ENCODE measurements at regions of chr17 and their contacts with region 1.

Region 1: GRCh38 chr17:32997753-32998632 is 6.3 kb downstream of the SPACA3 start:
- DNase-seq: peak; percentile 80 to 89 (median 88)
- ATAC-seq: peak; percentile 93
- H3K4me3 ChIP-seq: no peak overlapping the region
- H3K27ac ChIP-seq: no peak overlapping the region
- H3K4me1 ChIP-seq: peaks cover 8% of the 10 kb centered on the region in 2 experiments; a peak in 4 of 5 replicates
- H3K27me3 ChIP-seq: no peaks in the 10 kb centered on the region; a peak in 1 of 5 replicates
- CTCF ChIP-seq: peak; percentile 88 to 93 (median 89)
- EP300 ChIP-seq: no peak
- POLR2A ChIP-seq: no peak
- RAD21 ChIP-seq: peak; percentile 82 to 84

Region 2: DNA sequence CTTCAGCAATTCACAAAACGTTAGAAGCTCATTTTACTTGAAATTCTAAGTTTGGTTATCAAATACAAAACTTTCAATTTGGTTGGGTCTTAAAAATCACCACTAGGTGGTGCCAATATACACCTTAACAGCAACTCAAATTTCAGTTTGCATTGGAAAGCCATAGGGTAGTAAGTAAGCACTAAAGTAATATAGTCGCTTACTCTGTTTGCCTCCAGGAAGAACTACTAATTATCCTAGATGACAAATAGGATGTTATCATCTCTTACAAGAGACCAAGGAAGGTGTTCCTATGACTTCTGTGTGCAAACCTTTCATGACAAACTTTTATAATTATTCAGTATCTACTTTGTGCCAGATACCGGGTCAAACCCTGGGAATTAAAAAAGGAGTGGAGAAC is 214.4 kb before region 1 on chr17:
- CTCF ChIA-PET with region 1: interaction called, 9 read pairs
- POLR2A ChIA-PET with region 1: no interaction called
- in situ Hi-C with region 1: no loop called
- intact Hi-C with region 1: loop called (anchors 1 kb)
- DNase-seq: peak; percentile 49 to 70 (median 54)
- ATAC-seq: peak; percentile 83
- H3K4me3 ChIP-seq: no peak overlapping the region
- H3K27ac ChIP-seq: no peak overlapping the region
- H3K4me1 ChIP-seq: peaks cover 3 to 10% of the 10 kb centered on the region in 2 experiments; a peak in 3 of 5 replicates
- H3K27me3 ChIP-seq: no peaks in the 10 kb centered on the region
- CTCF ChIP-seq: peak; percentile 56 to 87 (median 73); a peak in 5 of 6 replicates
- EP300 ChIP-seq: no peak
- POLR2A ChIP-seq: no peak
- RAD21 ChIP-seq: peak; percentile 95 to 98

Region 3: DNA sequence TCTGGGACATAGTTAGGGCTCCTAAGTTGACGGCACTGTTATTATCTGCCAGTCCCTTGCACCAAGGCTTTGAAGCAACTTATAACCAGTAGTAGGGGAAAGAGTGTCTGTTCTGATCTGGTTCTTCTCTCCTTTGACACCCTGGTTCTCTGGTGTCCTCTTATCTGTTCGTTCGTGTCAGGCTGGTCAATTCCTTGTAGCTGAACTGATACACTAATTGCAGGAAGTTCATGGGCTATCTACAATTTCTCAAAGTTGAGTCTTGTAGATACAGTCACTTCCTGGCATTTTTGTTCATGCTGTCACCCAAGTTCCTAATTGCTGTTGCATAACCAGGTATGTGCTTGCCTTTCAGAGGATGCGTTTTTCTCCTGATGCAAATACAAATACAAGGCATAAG is 103.7 kb before region 1 on chr17:
- CTCF ChIA-PET with region 1: no interaction called
- POLR2A ChIA-PET with region 1: no interaction called
- in situ Hi-C with region 1: no loop called
- intact Hi-C with region 1: no loop called
- DNase-seq: peak in 2 of 4 experiments; percentile 70 to 82
- ATAC-seq: peak; percentile 39
- H3K4me3 ChIP-seq: no peak overlapping the region
- H3K27ac ChIP-seq: peak overlapping the region; percentile 77
- H3K4me1 ChIP-seq: peaks cover 8 to 55% of the 10 kb centered on the region in 2 experiments
- H3K27me3 ChIP-seq: no peaks in the 10 kb centered on the region
- CTCF ChIP-seq: no peak
- EP300 ChIP-seq: peak; percentile 87
- POLR2A ChIP-seq: no peak
- RAD21 ChIP-seq: no peak

Region 4: GRCh38 chr17:32936894-32937500 is 61.0 kb before region 1 on chr17:
- CTCF ChIA-PET with region 1: interaction called, 7 read pairs
- POLR2A ChIA-PET with region 1: interaction called, 3 read pairs
- in situ Hi-C with region 1: no loop called
- intact Hi-C with region 1: loop called (anchors 2 kb)
- DNase-seq: peak; percentile 77 to 84 (median 80)
- ATAC-seq: peak; percentile 94
- H3K4me3 ChIP-seq: no peak overlapping the region
- H3K27ac ChIP-seq: 0 out of 3 replicates have a peak overlapping the region, but pooled peaks have one; percentile 16
- H3K4me1 ChIP-seq: peaks cover 6 to 8% of the 10 kb centered on the region in 2 experiments; a peak in 4 of 5 replicates
- H3K27me3 ChIP-seq: no peaks in the 10 kb centered on the region
- CTCF ChIP-seq: peak; percentile 85 to 91 (median 91)
- EP300 ChIP-seq: no peak
- POLR2A ChIP-seq: no peak
- RAD21 ChIP-seq: peak; percentile 70 to 86

Region 5: GRCh38 chr17:32944248-32945010 is 53.6 kb before region 1 on chr17:
- CTCF ChIA-PET with region 1: interaction called, 7 read pairs
- POLR2A ChIA-PET with region 1: interaction called, 3 read pairs
- in situ Hi-C with region 1: loop called (anchors 5 kb)
- intact Hi-C with region 1: loop called (anchors 2 kb)
- DNase-seq: no peak
- ATAC-seq: peak; percentile 54
- H3K4me3 ChIP-seq: no peak overlapping the region
- H3K27ac ChIP-seq: no peak overlapping the region
- H3K4me1 ChIP-seq: peaks cover 0 to 10% of the 10 kb centered on the region in 2 experiments; a peak in 3 of 5 replicates
- H3K27me3 ChIP-seq: no peaks in the 10 kb centered on the region
- CTCF ChIP-seq: peak in 2 of 3 experiments; percentile 19 to 29; a peak in 3 of 6 replicates
- EP300 ChIP-seq: no peak
- POLR2A ChIP-seq: no peak
- RAD21 ChIP-seq: peak in 1 of 2 experiments; percentile 39; a peak in 1 of 4 replicates

Region 6: GRCh38 chr17:32960506-32961214 is 37.3 kb before region 1 on chr17:
- CTCF ChIA-PET with region 1: no interaction called
- POLR2A ChIA-PET with region 1: interaction called, 3 read pairs
- in situ Hi-C with region 1: no loop called
- intact Hi-C with region 1: loop called (anchors 5 kb)
- DNase-seq: peak in 2 of 4 experiments; percentile 46 to 54
- ATAC-seq: peak; percentile 58
- H3K4me3 ChIP-seq: no peak overlapping the region
- H3K27ac ChIP-seq: no peak overlapping the region
- H3K4me1 ChIP-seq: peaks cover 19 to 54% of the 10 kb centered on the region in 2 experiments
- H3K27me3 ChIP-seq: no peaks in the 10 kb centered on the region
- CTCF ChIP-seq: no peak
- EP300 ChIP-seq: no peak
- POLR2A ChIP-seq: no peak
- RAD21 ChIP-seq: no peak

Measured in K562 (cell line).